ENCODE measurements at regions of chr19 and their contacts with region 1.

Region 1: DNA sequence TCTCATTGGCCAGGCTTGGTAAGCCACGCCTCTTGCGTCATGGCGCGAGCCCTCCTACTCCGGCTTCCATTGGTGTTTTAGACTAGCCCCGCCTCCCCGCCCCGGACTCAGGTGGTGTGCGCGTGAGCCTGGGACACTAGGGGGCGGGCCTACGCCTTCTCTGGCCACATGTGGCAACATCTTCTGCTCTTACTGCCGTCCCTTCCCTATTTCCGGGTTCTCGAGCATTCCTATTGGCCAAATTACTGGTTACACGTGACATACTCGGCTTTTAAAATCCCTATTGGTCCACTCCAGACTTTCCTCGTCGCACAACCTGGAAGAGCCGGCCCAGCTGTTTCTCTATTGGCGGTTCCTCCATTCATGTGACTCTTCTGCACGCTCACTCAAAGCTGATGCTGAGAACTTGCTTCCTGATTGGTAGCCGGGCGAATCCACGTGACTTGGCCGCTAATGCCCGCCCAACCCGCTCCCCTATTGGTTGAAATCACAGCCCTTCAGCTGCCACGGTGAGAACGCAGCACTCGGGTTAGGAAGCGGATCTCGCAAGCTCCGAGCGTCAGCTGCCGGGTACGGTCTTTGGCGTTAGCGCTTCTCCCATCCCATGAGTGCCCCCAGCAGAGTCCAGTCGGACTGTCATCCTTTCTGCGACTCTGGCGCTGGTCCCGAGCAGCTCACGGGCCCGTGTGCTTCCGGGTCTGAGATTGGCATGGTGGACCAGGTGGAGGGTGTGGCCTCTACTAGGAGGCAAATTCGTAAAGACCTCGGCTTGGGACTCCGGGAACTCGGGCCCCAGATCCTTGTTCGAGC is at the start of gene BLOC1S3:
- DNase-seq: peak; percentile 100
- H3K4me3 ChIP-seq: peak within 1 kb of the TSS; percentile 88
- H3K27ac ChIP-seq: peak within 1 kb of the TSS; percentile 66
- H3K4me1 ChIP-seq: peaks cover 25% of the 10 kb centered on the region
- CTCF ChIP-seq: peak; percentile 63
- total RNA-seq, gene BLOC1S3: 8.1 and 9.7 TPM in 2 replicates

Region 2: GRCh38 chr19:45137179-45137761 is 41.2 kb before region 1 on chr19:
- CTCF ChIA-PET with region 1: interaction called, 3 read pairs
- POLR2A ChIA-PET with region 1: interaction called, 15 read pairs
- intact Hi-C with region 1: loop called (anchors 1 kb)
- DNase-seq: peak; percentile 95
- H3K4me3 ChIP-seq: peak overlapping the region; percentile 61
- H3K27ac ChIP-seq: peak overlapping the region; percentile 98
- H3K4me1 ChIP-seq: peaks cover 70% of the 10 kb centered on the region
- CTCF ChIP-seq: no peak

Measured in OCI-LY7 (cell line).